CD4-positive, alpha-beta T cell (primary cell): ENCODE measurements at regions of chr17 and their contacts with region 1.

Region 1: DNA sequence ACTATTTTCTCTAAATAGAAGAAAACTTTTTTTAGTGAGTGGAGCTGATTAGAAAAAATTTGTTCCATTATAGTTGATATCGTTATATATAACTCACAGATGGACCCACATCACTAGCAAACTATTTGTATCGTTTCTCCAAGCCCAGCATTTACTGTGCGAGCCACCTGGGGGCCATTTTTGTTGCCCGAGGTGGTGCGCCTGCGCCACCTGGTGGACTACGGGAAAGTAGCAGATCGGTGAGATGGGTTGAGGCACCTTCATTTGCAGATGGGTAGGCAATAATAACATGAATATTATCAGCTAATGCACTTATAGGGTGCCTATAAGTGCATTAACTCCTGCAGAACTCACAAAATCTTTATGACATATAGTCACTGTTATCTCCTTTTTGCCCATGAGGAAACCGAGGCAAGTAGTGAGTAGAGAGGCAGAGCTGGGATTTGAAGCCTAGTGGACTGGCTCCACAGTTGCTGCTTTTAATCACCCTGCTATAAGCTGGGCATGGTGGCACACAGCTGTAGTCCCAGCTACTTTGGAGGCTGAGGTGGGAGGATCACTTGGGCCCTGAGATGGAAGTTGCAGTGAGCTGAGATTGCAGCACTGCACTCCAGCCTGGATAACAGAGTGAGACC is 23.2 kb upstream of the NTN1 start:
- DNase-seq: peak; percentile 64 to 90 (median 76)
- ATAC-seq: peak; percentile 91
- H3K4me3 ChIP-seq: no peak overlapping the region
- H3K4me3 Mint-ChIP-seq: no peak overlapping the region
- H3K27ac ChIP-seq: no peak overlapping the region
- H3K27ac Mint-ChIP-seq: no peak overlapping the region
- H3K4me1 ChIP-seq: peaks cover 13% of the 10 kb centered on the region
- H3K4me1 Mint-ChIP-seq: peaks cover 13% of the 10 kb centered on the region
- H3K27me3 ChIP-seq: peaks cover 18 to 21% of the 10 kb centered on the region in 2 experiments
- H3K27me3 Mint-ChIP-seq: peaks cover 39% of the 10 kb centered on the region
- CTCF ChIP-seq: peak; percentile 98

Region 2: DNA sequence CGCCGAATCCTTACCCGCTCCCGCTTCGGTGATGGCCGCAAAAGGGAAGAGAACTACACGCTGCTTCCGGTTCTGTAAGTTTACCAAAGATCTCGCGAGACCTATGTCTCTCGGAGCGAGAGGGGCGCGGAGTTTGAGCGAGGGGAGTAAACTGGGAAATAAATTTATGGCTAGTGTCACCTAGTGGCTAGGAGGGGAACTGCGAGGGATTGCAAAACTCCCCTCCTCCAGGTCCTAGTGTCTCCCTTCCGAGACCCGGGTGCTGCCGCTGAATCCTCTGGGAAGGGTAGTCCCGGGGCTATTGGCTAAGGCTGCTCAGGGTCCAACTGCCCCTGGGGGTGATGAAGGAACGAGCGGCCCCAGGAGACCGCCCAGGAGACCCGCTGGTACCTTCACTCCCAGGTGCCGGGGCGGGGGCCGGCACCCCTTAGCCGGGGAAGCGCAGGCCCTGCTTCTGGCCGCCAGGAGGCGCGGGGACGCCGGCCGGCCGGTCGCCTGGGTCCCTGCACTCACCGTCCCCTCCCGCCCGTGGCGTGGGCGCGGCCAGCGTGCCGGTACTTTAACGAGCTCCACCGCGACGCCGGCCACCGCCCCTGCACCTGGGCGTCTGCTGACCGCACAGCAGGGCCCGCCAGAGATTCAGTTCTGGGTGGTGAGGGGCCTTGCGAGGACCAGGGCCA is 614.8 kb before region 1 on chr17 and contains the start of gene RPL26:
- CTCF ChIA-PET with region 1: no interaction called
- POLR2A ChIA-PET with region 1: no interaction called
- intact Hi-C with region 1: loop called in 1 of 2 experiments (anchors 1 kb)
- DNase-seq: peak; percentile 89 to 98 (median 93)
- ATAC-seq: peak; percentile 86
- H3K4me3 ChIP-seq: peak within 1 kb of the TSS; percentile 95
- H3K4me3 Mint-ChIP-seq: peak within 1 kb of the TSS; percentile 95
- H3K27ac ChIP-seq: peak within 1 kb of the TSS; percentile 72 to 76
- H3K27ac Mint-ChIP-seq: peak within 1 kb of the TSS; percentile 91
- H3K4me1 ChIP-seq: peaks cover 47% of the 10 kb centered on the region
- H3K4me1 Mint-ChIP-seq: peaks cover 64% of the 10 kb centered on the region
- H3K27me3 ChIP-seq: no peaks in the 10 kb centered on the region
- H3K27me3 Mint-ChIP-seq: no peaks in the 10 kb centered on the region
- CTCF ChIP-seq: peak; percentile 100
- total RNA-seq, gene RPL26: 2,959 to 3,104 TPM

Region 3: DNA sequence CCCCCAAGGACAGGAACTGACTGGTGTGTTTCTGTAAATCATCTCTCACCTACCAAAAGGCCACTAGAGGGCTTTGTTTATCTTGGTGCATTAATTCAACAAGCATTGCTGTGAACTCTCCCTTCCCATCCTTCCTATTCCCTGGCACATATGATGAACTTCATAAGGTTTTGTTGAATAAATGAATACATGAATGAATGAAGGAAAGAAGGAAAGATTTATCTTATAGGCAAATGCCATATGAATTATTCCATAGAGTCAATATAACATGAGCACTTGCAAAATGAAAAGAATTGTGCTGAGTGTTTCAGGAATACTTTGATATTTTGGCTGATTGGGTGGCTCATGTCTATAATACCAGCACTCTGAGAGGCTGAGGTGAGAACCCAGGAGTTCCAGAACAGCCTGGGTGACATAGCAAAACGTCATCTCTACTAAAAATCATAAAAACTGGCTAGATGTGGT is 244.1 kb before region 1 on chr17:
- CTCF ChIA-PET with region 1: no interaction called
- POLR2A ChIA-PET with region 1: no interaction called
- intact Hi-C with region 1: loop called (anchors 2 to 10 kb)
- DNase-seq: peak in 2 of 14 experiments; percentile 11 to 29
- ATAC-seq: no peak
- H3K4me3 ChIP-seq: no peak overlapping the region
- H3K4me3 Mint-ChIP-seq: no peak overlapping the region
- H3K27ac ChIP-seq: no peak overlapping the region
- H3K27ac Mint-ChIP-seq: no peak overlapping the region
- H3K4me1 ChIP-seq: no peaks in the 10 kb centered on the region
- H3K4me1 Mint-ChIP-seq: no peaks in the 10 kb centered on the region
- H3K27me3 ChIP-seq: peaks cover 0 to 4% of the 10 kb centered on the region in 2 experiments
- H3K27me3 Mint-ChIP-seq: peaks cover 18% of the 10 kb centered on the region
- CTCF ChIP-seq: no peak

Region 4: DNA sequence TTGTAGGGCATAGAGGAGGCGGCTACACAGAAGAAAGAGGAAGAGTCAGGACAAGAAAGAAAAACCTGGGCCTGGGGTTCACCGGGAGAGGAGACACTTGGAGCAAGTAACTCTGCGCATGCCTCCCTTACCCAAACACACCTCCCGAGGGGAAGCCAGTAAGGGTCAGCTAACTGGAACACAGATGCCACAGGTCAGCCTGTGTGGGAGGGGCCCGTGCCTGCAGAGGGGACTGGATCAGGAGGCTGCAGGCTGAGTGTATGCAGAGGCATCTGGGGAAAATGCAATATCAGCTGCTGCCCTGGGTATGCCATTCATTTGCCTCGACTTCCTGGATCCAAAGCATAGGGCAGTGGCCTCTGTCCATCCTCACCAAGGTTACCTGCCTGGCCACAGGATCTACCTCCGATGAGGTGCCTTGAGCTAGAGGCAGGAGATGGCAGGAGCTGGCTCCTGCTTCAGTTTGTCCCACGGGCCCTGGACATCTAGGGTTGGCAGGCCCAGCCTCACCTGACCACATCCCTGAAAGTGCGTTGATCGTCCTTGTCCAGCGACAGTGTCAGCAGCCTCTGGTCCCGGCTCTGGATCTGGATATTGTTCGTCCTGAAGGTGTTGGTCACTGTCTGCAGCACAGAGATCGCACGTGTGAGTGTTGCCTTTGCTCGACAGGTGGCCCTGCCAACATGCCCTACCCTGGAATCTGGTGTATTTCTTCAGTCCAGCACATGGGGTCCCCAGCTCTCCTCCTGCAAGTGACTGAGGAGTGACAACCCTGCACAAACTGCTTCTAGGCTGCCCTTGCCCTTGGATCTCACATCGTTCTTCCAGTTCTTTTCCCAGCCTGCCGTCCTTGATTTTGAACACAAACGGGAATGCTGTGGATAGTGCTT is 194.3 kb before region 1 on chr17:
- CTCF ChIA-PET with region 1: no interaction called
- POLR2A ChIA-PET with region 1: no interaction called
- intact Hi-C with region 1: loop called in 1 of 2 experiments (anchors 2 kb)
- DNase-seq: peak in 2 of 14 experiments; percentile 6 to 14
- ATAC-seq: no peak
- H3K4me3 ChIP-seq: no peak overlapping the region
- H3K4me3 Mint-ChIP-seq: no peak overlapping the region
- H3K27ac ChIP-seq: no peak overlapping the region
- H3K27ac Mint-ChIP-seq: no peak overlapping the region
- H3K4me1 ChIP-seq: peaks cover 6% of the 10 kb centered on the region
- H3K4me1 Mint-ChIP-seq: no peaks in the 10 kb centered on the region
- H3K27me3 ChIP-seq: no peaks in the 10 kb centered on the region
- H3K27me3 Mint-ChIP-seq: peaks cover 5% of the 10 kb centered on the region
- CTCF ChIP-seq: no peak

Region 5: DNA sequence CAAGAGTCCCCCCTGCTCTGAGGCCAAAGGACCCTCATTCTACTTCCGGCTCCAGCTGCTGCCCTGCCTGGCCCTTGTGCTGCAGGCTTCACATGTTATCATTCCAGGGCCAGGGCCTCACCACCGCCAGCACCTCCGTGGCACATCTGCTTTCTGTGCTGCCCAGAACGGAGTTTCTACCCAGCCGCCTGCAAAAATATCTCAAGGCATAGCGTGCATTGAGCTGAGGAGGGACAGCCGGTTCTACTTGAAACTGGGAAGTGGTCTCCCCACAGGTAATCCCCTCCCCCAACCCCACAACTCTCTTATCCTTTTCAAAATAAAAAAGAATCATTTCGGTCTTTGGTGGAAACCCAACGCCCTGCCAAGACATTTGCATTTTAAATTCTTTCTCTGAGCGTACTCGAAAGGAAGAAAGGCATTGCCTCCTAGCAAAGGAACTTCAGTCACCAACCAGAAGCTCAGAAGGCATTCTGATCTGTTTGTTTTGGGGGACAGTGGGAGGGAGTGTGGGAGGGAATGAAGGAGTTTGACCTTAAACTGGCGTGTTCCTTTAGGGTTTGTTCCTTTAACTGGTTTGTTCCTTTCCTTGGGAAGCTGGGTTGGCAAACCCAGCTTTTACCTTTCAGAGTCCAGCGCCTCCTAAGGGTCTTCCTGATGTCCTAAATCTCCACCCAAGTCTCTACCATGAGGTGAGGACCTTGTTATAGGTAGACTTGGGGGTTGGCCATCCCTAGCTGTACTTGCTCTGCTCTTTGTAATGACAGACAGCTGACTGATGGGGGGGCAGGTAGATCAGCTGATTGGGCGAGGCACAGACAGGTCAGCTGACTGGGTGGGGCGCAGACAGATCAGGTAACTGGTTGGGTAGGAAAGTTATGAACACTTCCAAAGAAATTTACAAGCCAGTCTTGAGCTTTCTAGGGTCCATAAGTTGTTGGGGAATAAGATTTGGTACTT is 97.2 kb before region 1 on chr17:
- CTCF ChIA-PET with region 1: interaction called, 16 read pairs
- POLR2A ChIA-PET with region 1: interaction called, 3 read pairs
- intact Hi-C with region 1: loop called in 1 of 2 experiments (anchors 1 kb)
- DNase-seq: peak in 6 of 14 experiments; percentile 29 to 65 (median 45)
- ATAC-seq: no peak
- H3K4me3 ChIP-seq: no peak overlapping the region
- H3K4me3 Mint-ChIP-seq: peak overlapping the region; percentile 9
- H3K27ac ChIP-seq: peak overlapping the region; percentile 39 to 54
- H3K27ac Mint-ChIP-seq: peak overlapping the region; percentile 93
- H3K4me1 ChIP-seq: peaks cover 63% of the 10 kb centered on the region
- H3K4me1 Mint-ChIP-seq: peaks cover 61% of the 10 kb centered on the region
- H3K27me3 ChIP-seq: no peaks in the 10 kb centered on the region
- H3K27me3 Mint-ChIP-seq: no peaks in the 10 kb centered on the region
- CTCF ChIP-seq: no peak

Region 6: DNA sequence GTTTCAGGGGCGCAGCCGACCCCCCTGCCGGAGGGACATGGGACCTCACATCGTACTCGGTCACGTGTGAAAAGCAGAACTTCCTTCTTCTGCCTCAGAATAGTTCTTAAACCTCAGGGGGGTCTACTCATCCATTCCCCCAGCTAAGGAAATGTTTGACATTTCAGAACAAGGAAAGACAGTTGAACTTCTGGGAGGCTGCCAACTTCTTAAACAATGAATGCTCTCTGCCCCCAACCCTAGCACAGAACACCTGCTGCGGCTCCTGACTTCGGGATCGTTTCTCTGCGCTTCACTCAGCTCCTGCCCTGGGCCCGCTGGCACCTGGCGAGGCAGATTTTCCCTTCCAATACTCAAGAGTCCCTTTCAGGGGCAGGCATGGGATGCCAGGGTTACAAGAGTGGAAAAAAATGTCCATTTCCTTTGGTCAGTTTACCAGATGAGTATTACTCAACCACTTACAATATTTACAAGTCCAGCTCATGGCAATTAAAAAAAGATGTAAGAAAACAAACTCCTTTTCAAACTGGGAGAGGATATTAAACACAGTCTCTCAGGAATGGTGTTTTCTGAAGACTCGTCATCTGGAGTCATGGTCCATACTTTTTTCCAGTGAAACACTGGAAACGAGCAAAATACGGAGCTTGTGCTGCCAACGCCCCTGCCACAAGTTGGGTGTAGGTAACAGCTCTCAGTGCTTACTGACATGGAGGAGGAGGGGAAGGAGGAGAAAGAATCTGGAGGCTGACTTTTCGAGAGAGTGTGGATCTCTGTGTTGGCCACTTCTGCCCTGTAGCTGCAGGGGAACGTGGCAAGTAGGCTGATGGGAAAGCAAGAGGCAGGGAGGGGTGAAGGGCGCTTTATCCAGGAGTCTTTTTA is 258.9 kb after region 1 on chr17:
- CTCF ChIA-PET with region 1: no interaction called
- POLR2A ChIA-PET with region 1: no interaction called
- intact Hi-C with region 1: no loop called
- DNase-seq: no peak
- ATAC-seq: no peak
- H3K4me3 ChIP-seq: no peak overlapping the region
- H3K4me3 Mint-ChIP-seq: no peak overlapping the region
- H3K27ac ChIP-seq: no peak overlapping the region
- H3K27ac Mint-ChIP-seq: no peak overlapping the region
- H3K4me1 ChIP-seq: peaks cover 14% of the 10 kb centered on the region
- H3K4me1 Mint-ChIP-seq: peaks cover 58% of the 10 kb centered on the region
- H3K27me3 ChIP-seq: no peaks in the 10 kb centered on the region
- H3K27me3 Mint-ChIP-seq: no peaks in the 10 kb centered on the region
- CTCF ChIP-seq: no peak

Region 7: DNA sequence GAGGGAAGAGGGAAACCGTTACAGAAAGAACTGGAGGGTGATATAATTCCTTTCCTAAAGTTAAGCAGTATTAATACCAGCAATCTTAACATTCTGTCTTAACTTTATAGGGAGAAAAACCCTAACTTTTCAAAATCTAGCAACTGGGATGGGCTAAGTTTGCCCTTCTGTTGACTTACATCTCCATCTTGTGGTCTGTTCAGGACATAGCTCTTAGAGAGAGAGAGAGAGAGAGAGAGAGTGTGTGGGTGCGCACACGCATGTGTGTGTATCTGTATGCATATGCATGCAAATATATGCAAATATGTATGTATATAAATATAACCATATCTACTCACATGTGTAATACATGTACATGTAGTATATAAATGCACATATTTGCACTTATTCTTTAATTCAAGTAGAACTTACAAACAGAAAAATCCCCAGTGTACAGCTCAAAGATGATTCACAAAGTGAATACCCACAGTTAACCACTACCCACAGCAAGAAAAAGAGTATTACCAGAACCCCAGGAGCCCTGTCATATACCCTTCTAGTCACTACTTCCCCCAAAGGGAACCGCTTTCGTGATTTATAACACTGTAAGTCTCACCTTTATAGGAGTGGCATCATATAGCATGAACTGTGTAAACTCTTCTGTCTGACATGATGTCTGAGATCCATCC is 531.1 kb after region 1 on chr17:
- CTCF ChIA-PET with region 1: no interaction called
- POLR2A ChIA-PET with region 1: no interaction called
- intact Hi-C with region 1: loop called in 1 of 2 experiments (anchors 5 kb)
- DNase-seq: peak in 3 of 14 experiments; percentile 7 to 29 (median 16)
- ATAC-seq: no peak
- H3K4me3 ChIP-seq: no peak overlapping the region
- H3K4me3 Mint-ChIP-seq: no peak overlapping the region
- H3K27ac ChIP-seq: no peak overlapping the region
- H3K27ac Mint-ChIP-seq: no peak overlapping the region
- H3K4me1 ChIP-seq: no peaks in the 10 kb centered on the region
- H3K4me1 Mint-ChIP-seq: no peaks in the 10 kb centered on the region
- H3K27me3 ChIP-seq: no peaks in the 10 kb centered on the region
- H3K27me3 Mint-ChIP-seq: no peaks in the 10 kb centered on the region
- CTCF ChIP-seq: peak; percentile 28